Activated CD8-positive, alpha-beta memory T cell treated with anti-CD3 and anti-CD28 coated beads, Interleukin-2, amount 10 ng/mL, durations not matched to agents 7 days and 5 days (primary cell): ENCODE measurements at regions of chr17 and their contacts with region 1.

Region 1: DNA sequence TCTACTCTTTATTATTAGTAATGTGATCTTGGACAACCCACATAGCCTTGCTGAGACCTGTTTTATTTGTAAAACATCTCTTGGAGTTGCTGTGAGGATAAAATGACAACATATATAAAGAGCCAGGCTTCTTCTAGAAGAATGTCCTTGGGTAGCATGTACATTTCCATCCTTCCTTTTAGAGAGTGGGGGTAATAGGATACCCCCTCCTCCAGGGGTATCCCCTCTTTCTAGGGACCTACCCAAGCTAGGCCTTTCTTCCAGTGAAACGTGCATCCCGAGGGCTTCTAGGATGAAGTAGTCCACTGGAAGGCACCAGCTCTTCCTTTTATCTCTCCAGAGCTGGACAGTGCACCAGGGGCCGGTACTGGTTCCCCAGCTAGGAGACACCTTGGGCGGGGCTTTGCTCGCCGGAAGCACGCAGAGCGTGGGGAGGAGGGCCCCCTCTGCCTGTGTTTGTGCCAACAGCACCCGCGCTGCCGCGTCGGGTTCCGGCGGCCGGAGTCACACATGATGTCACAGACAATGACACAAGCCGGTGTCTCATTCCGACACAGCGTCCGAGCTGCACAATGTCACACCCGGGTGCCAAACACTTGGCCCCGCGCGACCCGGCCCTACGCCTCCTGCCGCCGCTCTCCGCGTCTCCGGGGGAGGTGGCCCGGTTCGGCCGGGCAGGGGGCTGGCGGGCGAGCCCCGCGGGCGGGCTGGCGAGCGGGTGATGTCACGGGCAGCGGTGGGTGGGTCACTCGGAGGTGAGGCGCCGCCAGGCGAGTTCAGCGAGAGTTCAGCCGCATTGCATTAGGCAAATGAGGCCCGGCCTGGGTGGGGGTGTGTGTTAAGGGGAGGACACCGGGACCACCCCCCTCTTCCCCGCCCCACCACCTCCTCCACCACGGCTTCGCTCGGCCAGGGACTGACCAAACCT is 23.4 kb downstream of the GJD3 start:
- DNase-seq: peak; percentile 95
- ATAC-seq: peak; percentile 91
- H3K4me3 Mint-ChIP-seq: peak overlapping the region; percentile 68
- H3K27ac Mint-ChIP-seq: peak overlapping the region; percentile 87
- H3K4me1 Mint-ChIP-seq: peaks cover 75% of the 10 kb centered on the region
- H3K27me3 Mint-ChIP-seq: no peaks in the 10 kb centered on the region

Region 2: GRCh38 chr17:40209404-40210093 is 131.6 kb before region 1 on chr17:
- CTCF ChIA-PET with region 1: no interaction called
- DNase-seq: no peak
- ATAC-seq: no peak
- H3K4me3 Mint-ChIP-seq: no peak overlapping the region
- H3K27ac Mint-ChIP-seq: no peak overlapping the region
- H3K4me1 Mint-ChIP-seq: no peaks in the 10 kb centered on the region
- H3K27me3 Mint-ChIP-seq: peaks cover 4% of the 10 kb centered on the region

Region 3: GRCh38 chr17:40317880-40318829 is 23.0 kb before region 1 on chr17:
- CTCF ChIA-PET with region 1: interaction called, 27 read pairs
- DNase-seq: peak; percentile 95
- ATAC-seq: peak; percentile 77
- H3K4me3 Mint-ChIP-seq: peak overlapping the region; percentile 94
- H3K27ac Mint-ChIP-seq: peak overlapping the region; percentile 88
- H3K4me1 Mint-ChIP-seq: peaks cover 82% of the 10 kb centered on the region
- H3K27me3 Mint-ChIP-seq: no peaks in the 10 kb centered on the region